Astrocyte of the cerebellum (primary cell): ENCODE measurements at regions of chr14 and their contacts with region 1.

Region 1: GRCh38 chr14:65164068-65164824 is 61.9 kb upstream of the MAX start:
- DNase-seq: peak; percentile 62
- H3K4me3 ChIP-seq: no peak overlapping the region
- CTCF ChIP-seq: peak; percentile 60

Region 2: GRCh38 chr14:65958664-65959562 is 794.7 kb after region 1 on chr14:
- in situ Hi-C with region 1: loop called (anchors 25 kb)
- DNase-seq: no peak
- H3K4me3 ChIP-seq: no peak overlapping the region
- CTCF ChIP-seq: peak; percentile 32